ENCODE measurements at regions of chr2 and their contacts with region 1.

Region 1: DNA sequence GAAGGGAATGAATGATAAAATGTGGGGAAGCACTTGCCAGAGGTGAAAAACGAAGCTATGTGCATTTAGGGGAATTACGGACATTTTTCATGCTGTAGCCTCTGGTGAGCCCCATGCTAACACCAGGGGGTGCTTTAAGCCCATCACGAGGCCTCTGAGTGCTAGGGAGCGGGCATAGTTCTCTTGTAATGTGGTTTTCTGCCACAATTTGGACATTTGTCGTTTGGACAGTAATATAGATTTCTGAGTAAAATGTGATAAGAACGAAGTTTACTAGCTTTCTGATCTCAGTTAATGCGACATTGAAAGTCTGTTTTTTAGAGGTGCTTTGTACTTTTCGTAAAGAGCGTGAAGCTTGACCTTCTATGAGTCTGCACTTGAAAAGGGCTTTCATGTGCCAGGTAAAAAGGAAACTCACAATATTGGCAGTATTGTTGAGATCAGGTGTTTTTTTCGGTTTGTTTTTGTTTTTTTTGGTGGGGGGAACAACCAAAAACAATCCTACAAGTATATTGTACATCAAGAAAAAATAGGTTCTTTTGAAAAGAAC is 50.6 kb downstream of the TRAF3IP1 start:
- DNase-seq: peak; percentile 76
- ATAC-seq: peak; percentile 95
- H3K4me3 ChIP-seq: no peak overlapping the region
- H3K27ac ChIP-seq: no peak overlapping the region
- H3K4me1 ChIP-seq: peaks cover 43% of the 10 kb centered on the region
- H3K27me3 ChIP-seq: no peaks in the 10 kb centered on the region
- CTCF ChIP-seq: peak; percentile 97
- EP300 ChIP-seq: no peak
- POLR2A ChIP-seq: no peak
- RAD21 ChIP-seq: peak; percentile 96

Region 2: GRCh38 chr2:238305092-238305862 is 65.6 kb before region 1 on chr2:
- CTCF ChIA-PET with region 1: no interaction called
- POLR2A ChIA-PET with region 1: no interaction called
- in situ Hi-C with region 1: no loop called
- intact Hi-C with region 1: no loop called
- DNase-seq: peak; percentile 51
- ATAC-seq: peak; percentile 83
- H3K4me3 ChIP-seq: peak overlapping the region in 1 of 3 experiments; percentile 22; a peak in 1 of 6 replicates
- H3K27ac ChIP-seq: no peak overlapping the region
- H3K4me1 ChIP-seq: peaks cover 33% of the 10 kb centered on the region
- H3K27me3 ChIP-seq: peaks cover 1 to 8% of the 10 kb centered on the region in 2 experiments; a peak in 3 of 5 replicates
- CTCF ChIP-seq: peak; percentile 64
- EP300 ChIP-seq: no peak
- POLR2A ChIP-seq: no peak
- RAD21 ChIP-seq: peak; percentile 53

Region 3: DNA sequence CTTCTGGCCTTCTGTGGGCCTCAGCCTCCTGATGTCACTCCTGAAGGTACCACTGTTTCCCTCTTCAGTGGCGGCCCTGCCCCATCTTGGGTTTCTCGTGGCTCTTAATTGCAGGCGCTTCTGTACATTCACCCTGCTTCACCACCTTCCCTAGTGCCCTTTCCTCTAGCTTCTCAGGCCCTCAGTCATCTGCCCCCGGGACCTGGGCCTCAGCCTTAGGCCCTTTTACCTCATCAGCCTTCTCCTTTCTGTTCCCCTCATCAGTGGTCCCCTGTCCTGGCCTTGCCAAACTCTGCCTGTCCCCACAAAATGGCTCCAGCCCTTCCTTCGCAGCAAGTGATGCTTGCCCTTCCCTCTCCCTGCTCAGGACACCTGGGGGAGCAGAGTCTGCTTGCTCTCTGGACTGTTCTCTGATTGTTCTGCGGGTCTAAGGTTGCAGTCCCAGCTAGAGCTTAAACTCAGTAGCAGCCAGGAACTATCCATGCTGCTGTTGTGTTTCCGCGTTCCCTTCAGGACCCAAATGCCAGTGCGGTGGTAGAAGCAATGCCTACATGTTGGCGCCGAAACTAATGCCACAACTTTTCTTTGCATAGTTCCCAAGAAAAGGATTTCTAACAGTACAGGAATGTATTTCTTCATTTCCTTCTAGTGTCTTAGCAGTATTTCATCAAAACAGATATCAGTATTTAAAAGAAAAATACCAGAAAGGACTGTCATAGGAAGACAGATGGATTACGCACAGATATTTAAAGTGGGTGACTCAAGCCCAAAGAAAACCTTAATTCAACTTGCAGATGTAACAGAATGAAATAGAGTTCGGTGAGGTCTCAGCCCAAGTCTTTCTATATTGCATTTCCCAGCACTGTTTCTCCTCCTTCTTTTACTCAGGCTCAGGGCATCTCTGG is 63.3 kb after region 1 on chr2:
- CTCF ChIA-PET with region 1: no interaction called
- POLR2A ChIA-PET with region 1: no interaction called
- in situ Hi-C with region 1: no loop called
- intact Hi-C with region 1: loop called (anchors 2 kb)
- DNase-seq: no peak
- ATAC-seq: peak; percentile 69
- H3K4me3 ChIP-seq: peak overlapping the region in 1 of 3 experiments; percentile 32; a peak in 1 of 6 replicates
- H3K27ac ChIP-seq: peak overlapping the region; percentile 65
- H3K4me1 ChIP-seq: peaks cover 66% of the 10 kb centered on the region
- H3K27me3 ChIP-seq: no peaks in the 10 kb centered on the region
- CTCF ChIP-seq: no peak
- EP300 ChIP-seq: no peak
- POLR2A ChIP-seq: no peak
- RAD21 ChIP-seq: no peak

Region 4: DNA sequence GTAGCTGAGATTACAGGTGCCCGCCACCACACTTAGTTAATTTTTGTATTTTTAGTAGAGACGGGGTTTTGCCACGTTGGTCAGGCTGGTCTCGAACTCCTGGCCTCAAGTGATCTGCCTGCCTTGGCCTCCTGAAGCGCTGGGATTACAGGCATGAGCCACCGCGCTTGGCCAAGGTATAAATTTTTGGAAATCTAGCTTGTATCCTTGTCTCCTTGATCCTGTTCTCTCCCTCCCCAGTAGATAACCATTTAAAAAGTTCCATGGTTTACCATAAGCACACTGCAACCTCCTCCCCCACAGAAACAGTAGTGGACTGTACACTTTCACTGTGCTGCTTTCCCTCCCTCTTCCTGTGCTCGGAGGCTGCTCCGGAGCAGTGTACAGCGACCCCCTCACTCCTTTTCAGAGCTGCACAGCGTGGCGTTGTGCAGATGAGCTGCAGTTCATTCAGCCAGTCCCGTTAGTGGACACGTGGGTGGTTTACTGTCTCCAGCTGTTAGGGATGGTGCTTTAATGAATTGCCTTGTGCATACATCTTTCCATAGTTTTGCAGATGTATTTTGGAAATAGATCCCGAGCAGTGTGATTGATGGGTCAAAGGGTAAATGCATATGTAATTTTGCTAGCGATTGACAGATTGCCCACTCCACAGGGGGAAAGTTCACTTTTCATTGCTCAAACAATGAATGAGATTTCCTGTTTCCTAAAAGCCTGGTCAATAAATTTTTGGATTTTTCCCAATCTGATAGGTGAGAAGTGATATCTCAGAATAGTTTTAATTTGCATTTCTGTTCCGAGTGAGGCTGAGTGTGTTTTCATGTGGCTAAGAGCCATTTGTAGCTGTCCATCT is 70.6 kb after region 1 on chr2:
- CTCF ChIA-PET with region 1: no interaction called
- POLR2A ChIA-PET with region 1: interaction called, 4 read pairs
- in situ Hi-C with region 1: no loop called
- intact Hi-C with region 1: loop called (anchors 1 kb)
- DNase-seq: peak; percentile 88
- ATAC-seq: peak; percentile 99
- H3K4me3 ChIP-seq: peak overlapping the region; percentile 16 to 52 (median 18); a peak in 4 of 6 replicates
- H3K27ac ChIP-seq: peak overlapping the region; percentile 65
- H3K4me1 ChIP-seq: peaks cover 41% of the 10 kb centered on the region
- H3K27me3 ChIP-seq: no peaks in the 10 kb centered on the region
- CTCF ChIP-seq: peak; percentile 87
- EP300 ChIP-seq: peak in 1 of 2 experiments; percentile 75; a peak in 1 of 4 replicates
- POLR2A ChIP-seq: peak; percentile 49 to 54; a peak in 3 of 4 replicates
- RAD21 ChIP-seq: peak; percentile 78

Region 5: GRCh38 chr2:238462782-238463396 is 92.0 kb after region 1 on chr2:
- CTCF ChIA-PET with region 1: interaction called, 87 read pairs
- POLR2A ChIA-PET with region 1: no interaction called
- in situ Hi-C with region 1: loop called (anchors 5 kb)
- intact Hi-C with region 1: loop called (anchors 1 kb)
- DNase-seq: peak; percentile 77
- ATAC-seq: peak; percentile 58
- H3K4me3 ChIP-seq: no peak overlapping the region
- H3K27ac ChIP-seq: no peak overlapping the region
- H3K4me1 ChIP-seq: peaks cover 38% of the 10 kb centered on the region
- H3K27me3 ChIP-seq: no peaks in the 10 kb centered on the region
- CTCF ChIP-seq: peak; percentile 84
- EP300 ChIP-seq: no peak
- POLR2A ChIP-seq: no peak
- RAD21 ChIP-seq: peak; percentile 77

Region 6: GRCh38 chr2:238560234-238560633 is 189.3 kb after region 1 on chr2:
- CTCF ChIA-PET with region 1: interaction called, 16 read pairs
- POLR2A ChIA-PET with region 1: no interaction called
- in situ Hi-C with region 1: loop called (anchors 10 kb)
- intact Hi-C with region 1: loop called (anchors 2 kb)
- DNase-seq: peak; percentile 62
- ATAC-seq: peak; percentile 96
- H3K4me3 ChIP-seq: no peak overlapping the region; a peak in 1 of 6 replicates
- H3K27ac ChIP-seq: no peak overlapping the region
- H3K4me1 ChIP-seq: peaks cover 13% of the 10 kb centered on the region
- H3K27me3 ChIP-seq: peaks cover 5 to 50% of the 10 kb centered on the region in 2 experiments; a peak in 3 of 5 replicates
- CTCF ChIP-seq: peak; percentile 87
- EP300 ChIP-seq: no peak
- POLR2A ChIP-seq: no peak
- RAD21 ChIP-seq: peak; percentile 90

Region 7: GRCh38 chr2:238569507-238570195 is 198.8 kb after region 1 on chr2:
- CTCF ChIA-PET with region 1: interaction called, 4 read pairs
- POLR2A ChIA-PET with region 1: no interaction called
- in situ Hi-C with region 1: loop called (anchors 10 kb)
- intact Hi-C with region 1: no loop called
- DNase-seq: no peak
- ATAC-seq: no peak
- H3K4me3 ChIP-seq: no peak overlapping the region
- H3K27ac ChIP-seq: no peak overlapping the region
- H3K4me1 ChIP-seq: no peaks in the 10 kb centered on the region
- H3K27me3 ChIP-seq: peaks cover 7 to 65% of the 10 kb centered on the region in 2 experiments; a peak in 4 of 5 replicates
- CTCF ChIP-seq: no peak
- EP300 ChIP-seq: no peak
- POLR2A ChIP-seq: no peak
- RAD21 ChIP-seq: no peak

Region 8: GRCh38 chr2:238784671-238785527 is 414.0 kb after region 1 on chr2:
- CTCF ChIA-PET with region 1: interaction called, 9 read pairs
- POLR2A ChIA-PET with region 1: no interaction called
- in situ Hi-C with region 1: loop called (anchors 25 kb)
- intact Hi-C with region 1: loop called (anchors 5 kb)
- DNase-seq: peak; percentile 48
- ATAC-seq: peak; percentile 95
- H3K4me3 ChIP-seq: no peak overlapping the region
- H3K27ac ChIP-seq: no peak overlapping the region
- H3K4me1 ChIP-seq: no peaks in the 10 kb centered on the region
- H3K27me3 ChIP-seq: peaks cover 2 to 52% of the 10 kb centered on the region in 2 experiments
- CTCF ChIP-seq: peak; percentile 95
- EP300 ChIP-seq: no peak
- POLR2A ChIP-seq: no peak
- RAD21 ChIP-seq: peak; percentile 78